ENCODE measurements at regions of chr12 and their contacts with region 1.

Region 1: DNA sequence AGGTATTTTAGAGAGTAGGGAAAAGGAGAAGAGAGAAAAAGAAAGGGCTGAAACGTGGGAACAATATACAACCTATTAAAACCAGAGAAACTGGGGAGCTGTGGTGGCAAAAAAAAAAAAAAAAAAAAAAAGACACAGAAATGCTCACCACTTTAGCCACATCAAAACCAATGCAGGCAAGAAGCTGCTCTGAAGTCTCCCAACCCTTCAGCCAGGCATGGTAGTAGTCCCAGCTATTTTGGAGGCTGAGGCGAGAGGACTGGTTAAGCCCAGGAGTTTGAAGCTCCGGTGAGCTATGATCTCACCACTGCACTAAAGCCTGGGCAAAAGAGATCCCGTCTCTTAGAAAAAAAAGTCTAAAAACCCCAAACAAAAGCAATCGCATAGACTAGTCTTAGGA is 33.2 kb downstream of the DENND5B start:
- DNase-seq: no peak
- ATAC-seq: no peak
- H3K4me3 Mint-ChIP-seq: no peak overlapping the region
- H3K27ac Mint-ChIP-seq: no peak overlapping the region
- H3K4me1 Mint-ChIP-seq: peaks cover 44% of the 10 kb centered on the region
- H3K27me3 Mint-ChIP-seq: no peaks in the 10 kb centered on the region
- CTCF ChIP-seq: no peak

Region 2: GRCh38 chr12:31570880-31571279 is 13.2 kb after region 1 on chr12:
- CTCF ChIA-PET with region 1: no interaction called
- POLR2A ChIA-PET with region 1: interaction called, 11 read pairs
- intact Hi-C with region 1: no loop called
- DNase-seq: no peak
- ATAC-seq: no peak
- H3K4me3 Mint-ChIP-seq: no peak overlapping the region
- H3K27ac Mint-ChIP-seq: peak overlapping the region; percentile 27
- H3K4me1 Mint-ChIP-seq: peaks cover 71% of the 10 kb centered on the region
- H3K27me3 Mint-ChIP-seq: no peaks in the 10 kb centered on the region
- CTCF ChIP-seq: no peak